Activated naive CD4-positive, alpha-beta T cell treated with anti-CD3 and anti-CD28 coated beads, Interleukin-2, amount 10 ng/mL, durations not matched to agents 7 days and 5 days (primary cell): ENCODE measurements at regions of chr7 and their contacts with region 1.

Region 1: DNA sequence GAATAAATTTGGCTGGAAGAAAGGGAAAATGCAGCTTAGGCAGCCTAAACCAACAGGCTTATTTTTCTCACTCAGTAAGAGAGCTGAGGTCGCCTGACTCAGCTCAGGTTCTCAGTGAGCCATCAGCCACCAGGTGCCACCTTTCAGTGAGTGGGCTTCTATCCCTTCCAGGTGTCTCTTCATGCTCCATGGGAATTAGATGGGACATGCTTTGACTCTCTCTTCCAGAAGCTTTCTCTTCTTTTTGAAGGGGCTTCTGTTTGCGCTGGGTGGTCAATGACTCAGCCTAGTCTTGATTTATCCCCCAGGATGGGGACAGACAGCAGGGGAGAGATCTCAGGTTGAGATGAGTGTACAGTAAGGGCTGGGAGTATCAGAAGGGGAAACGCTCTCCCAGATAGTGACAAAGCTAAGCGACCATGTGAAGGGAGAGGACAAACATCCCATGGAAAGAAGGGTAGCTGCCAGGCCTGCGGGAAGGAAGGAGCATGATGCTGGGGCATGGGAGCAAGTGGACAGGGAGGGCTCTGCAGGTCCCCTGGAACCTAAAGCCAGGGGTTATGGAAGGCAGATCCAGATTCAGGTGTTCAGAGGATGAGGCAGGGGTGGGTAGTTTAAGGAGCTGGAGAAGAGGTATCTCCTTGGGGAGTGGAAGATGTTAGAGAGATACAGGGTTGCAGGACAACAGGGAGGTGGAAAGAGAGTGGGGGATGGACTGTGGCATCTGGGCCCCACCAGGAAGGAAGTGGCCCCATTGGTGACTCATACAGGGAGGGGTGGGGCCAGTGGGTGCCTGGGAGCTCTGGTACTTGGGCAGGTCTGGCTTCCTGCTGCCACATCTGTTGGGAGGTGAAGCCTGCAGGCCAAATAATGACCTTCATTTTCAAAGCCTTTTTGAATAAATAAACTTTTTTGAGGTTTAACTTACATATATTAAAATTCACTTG is 32.5 kb downstream of the OGDH start:
- DNase-seq: peak; percentile 91
- H3K4me3 Mint-ChIP-seq: peak overlapping the region; percentile 68
- H3K27ac Mint-ChIP-seq: peak overlapping the region; percentile 100
- H3K4me1 Mint-ChIP-seq: peaks cover 78% of the 10 kb centered on the region
- H3K27me3 Mint-ChIP-seq: no peaks in the 10 kb centered on the region

Region 2: GRCh38 chr7:44606450-44607254 is 32.2 kb before region 1 on chr7 and contains the start of gene OGDH:
- CTCF ChIA-PET with region 1: interaction called, 16 read pairs
- DNase-seq: peak; percentile 100
- H3K4me3 Mint-ChIP-seq: peak within 1 kb of the TSS; percentile 97
- H3K27ac Mint-ChIP-seq: peak within 1 kb of the TSS; percentile 100
- H3K4me1 Mint-ChIP-seq: peaks cover 52% of the 10 kb centered on the region
- H3K27me3 Mint-ChIP-seq: peaks cover 35% of the 10 kb centered on the region

Region 3: GRCh38 chr7:44625526-44626471 is 13.1 kb before region 1 on chr7:
- CTCF ChIA-PET with region 1: interaction called, 13 read pairs
- DNase-seq: no peak
- H3K4me3 Mint-ChIP-seq: no peak overlapping the region
- H3K27ac Mint-ChIP-seq: peak overlapping the region; percentile 92
- H3K4me1 Mint-ChIP-seq: peaks cover 79% of the 10 kb centered on the region
- H3K27me3 Mint-ChIP-seq: no peaks in the 10 kb centered on the region